ENCODE measurements at regions of chr15 and their contacts with region 1.

Region 1: DNA sequence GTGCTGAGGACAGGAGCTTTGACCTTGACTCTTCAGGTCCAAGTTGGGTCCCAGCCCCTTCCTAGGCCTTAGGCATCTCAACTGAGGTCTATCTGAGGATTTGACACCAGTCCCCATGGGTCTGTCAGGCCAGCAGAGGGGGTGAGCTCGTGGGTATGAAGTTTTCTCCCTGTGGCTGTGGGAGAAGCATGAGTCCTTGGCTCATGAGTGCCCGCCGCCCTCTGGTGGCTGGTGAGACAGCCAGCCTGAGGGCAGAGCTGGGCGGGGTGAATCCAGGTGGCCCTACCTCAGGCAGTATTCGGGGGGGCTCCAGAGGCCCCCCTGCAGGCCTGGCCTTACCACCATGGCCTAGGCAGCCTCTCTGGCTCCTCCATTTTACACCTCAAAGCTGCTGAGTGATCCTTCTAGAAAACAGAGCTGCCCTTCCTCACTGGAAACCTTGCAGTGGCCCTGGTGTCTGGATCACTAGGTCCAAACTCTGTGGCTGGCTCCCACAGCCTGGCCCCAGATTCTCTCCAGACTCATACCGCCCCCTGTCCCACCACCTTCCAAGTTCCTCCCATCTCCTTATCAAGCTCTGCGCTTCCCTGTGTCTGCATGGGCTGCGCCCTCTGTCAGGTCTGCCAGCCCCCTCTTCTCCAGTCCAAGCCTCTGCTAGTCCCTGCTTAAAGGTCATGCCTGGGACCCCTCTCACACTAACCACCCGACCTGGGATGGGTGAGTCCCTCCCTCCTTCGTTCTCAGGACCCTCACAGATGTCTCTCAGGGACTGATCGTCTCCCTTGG is 16.1 kb downstream of the SH2D7 start:
- DNase-seq: peak; percentile 63 to 83 (median 76)
- H3K4me3 ChIP-seq: no peak overlapping the region
- H3K27ac ChIP-seq: no peak overlapping the region
- H3K27me3 ChIP-seq: no peaks in the 10 kb centered on the region
- CTCF ChIP-seq: peak; percentile 67 to 99 (median 94)

Region 2: DNA sequence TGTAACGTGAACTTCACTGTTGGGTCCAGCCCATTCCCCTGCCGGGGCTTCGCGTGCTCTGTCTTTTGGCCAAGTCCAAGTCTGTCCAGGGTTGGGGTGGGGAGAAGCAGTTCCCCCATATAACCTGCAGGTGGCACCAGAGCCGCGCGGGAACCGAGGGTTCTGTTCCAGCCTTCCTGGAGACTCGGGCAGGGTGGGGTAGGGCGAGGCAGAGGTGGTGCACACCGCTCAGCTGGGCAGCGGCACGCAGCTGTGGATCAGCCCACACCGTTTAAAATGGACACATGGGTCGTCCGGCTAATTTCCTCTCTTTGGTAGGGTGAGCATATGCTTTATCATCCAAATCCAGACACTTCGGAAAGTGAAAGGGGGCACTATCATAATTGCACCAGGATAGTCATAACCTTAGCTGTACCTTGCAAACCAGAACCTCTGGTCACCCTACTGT is 149.0 kb before region 1 on chr15:
- intact Hi-C with region 1: loop called (anchors 1 to 2 kb)
- DNase-seq: peak in 9 of 10 donors; percentile 68 to 84 (median 75)
- H3K4me3 ChIP-seq: peak overlapping the region in 52 of 59 donors; percentile 9 to 61 (median 40)
- H3K27ac ChIP-seq: no peak overlapping the region
- H3K27me3 ChIP-seq: no peaks in the 10 kb centered on the region
- CTCF ChIP-seq: peak; percentile 82 to 98 (median 94)

Region 3: GRCh38 chr15:77966540-77967290 is 141.8 kb before region 1 on chr15:
- intact Hi-C with region 1: loop called (anchors 1 to 2 kb)
- DNase-seq: peak in 7 of 10 donors; percentile 44 to 75 (median 64)
- H3K4me3 ChIP-seq: no peak overlapping the region
- H3K27ac ChIP-seq: no peak overlapping the region
- H3K27me3 ChIP-seq: no peaks in the 10 kb centered on the region
- CTCF ChIP-seq: peak; percentile 70 to 97 (median 89)

Region 4: DNA sequence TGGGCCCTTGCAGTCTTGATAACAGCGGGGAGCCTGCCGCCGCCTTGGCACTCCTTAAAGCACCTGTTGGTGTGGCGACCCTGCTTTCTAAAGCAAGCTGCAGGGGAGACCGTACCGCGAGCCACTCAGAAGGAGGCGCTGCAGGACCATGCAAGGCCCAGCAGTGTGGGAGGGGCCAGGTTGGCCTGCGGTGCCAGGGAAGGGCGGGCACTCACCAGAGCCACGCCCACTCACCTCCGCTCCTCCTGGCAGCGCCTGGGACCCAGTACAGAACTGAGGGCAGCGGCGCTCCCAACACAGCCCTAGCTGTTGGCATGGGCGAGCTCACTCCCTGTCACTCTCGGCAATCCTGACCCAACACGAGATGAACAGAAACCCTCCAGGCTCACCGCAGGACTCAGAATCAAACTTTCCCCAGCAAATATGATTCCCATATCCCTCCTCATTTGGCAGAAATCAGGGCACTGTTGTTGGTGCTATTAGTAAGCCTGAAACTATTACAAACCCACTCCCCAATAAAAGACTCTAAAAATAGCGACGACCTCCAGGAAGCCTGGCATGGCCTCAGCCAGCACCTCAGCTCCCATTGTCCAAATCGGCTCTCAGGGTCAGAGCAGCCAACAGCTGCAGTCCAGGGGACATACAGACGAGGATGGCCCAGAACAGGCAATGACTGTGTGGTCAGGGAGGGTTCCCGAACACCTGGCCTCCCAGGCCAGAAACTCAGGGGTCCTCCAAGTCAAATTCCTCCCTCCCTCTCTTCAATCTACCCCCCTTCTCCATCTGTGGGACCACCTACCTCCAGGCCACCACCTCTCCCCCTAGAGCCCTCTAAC is 108.2 kb before region 1 on chr15:
- intact Hi-C with region 1: loop called in 1 of 2 experiments (anchors 1 kb)
- DNase-seq: peak in 3 of 10 donors; percentile 32 to 46 (median 43)
- H3K4me3 ChIP-seq: no peak overlapping the region
- H3K27ac ChIP-seq: no peak overlapping the region
- H3K27me3 ChIP-seq: no peaks in the 10 kb centered on the region
- CTCF ChIP-seq: peak in 38 of 56 donors; percentile 16 to 59 (median 39)

Region 5: GRCh38 chr15:78149068-78149804 is 40.7 kb after region 1 on chr15 and contains the start of gene IDH3A:
- intact Hi-C with region 1: no loop called
- DNase-seq: peak; percentile 98 to 100 (median 99)
- H3K4me3 ChIP-seq: peak within 1 kb of the TSS; percentile 67 to 96 (median 86)
- H3K27ac ChIP-seq: peak within 1 kb of the TSS in 52 of 59 donors; percentile 15 to 90 (median 74)
- H3K27me3 ChIP-seq: no peaks in the 10 kb centered on the region
- CTCF ChIP-seq: peak in 13 of 56 donors; percentile 3 to 46 (median 15)
- total RNA-seq, gene IDH3A: 101 to 276 (median 201) TPM

Region 6: DNA sequence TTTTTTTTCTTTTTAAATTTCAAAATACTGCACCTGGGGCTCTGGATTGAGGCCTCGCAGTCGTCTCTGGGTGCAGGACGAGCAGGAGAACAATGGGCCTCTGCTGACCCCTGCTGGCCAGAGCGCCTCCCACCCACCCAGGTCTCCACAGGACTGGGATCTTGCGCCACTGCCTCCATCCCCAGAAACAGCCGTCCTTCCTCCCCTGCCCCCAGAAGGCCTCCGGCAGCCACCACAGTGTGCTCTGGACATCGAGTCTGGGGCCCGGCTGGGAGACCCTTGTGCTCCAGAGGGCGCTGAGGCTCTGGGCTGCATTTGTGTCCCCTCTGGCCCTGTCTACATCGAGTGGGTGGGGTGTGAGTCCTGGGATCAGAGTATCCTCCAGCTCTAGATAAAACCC is 132.5 kb after region 1 on chr15:
- intact Hi-C with region 1: loop called (anchors 1 to 5 kb)
- DNase-seq: peak; percentile 77 to 92 (median 89)
- H3K4me3 ChIP-seq: no peak overlapping the region
- H3K27ac ChIP-seq: peak overlapping the region in 5 of 59 donors; percentile 14 to 55 (median 44)
- H3K27me3 ChIP-seq: peaks cover 0 to 4% (median 0%) of the 10 kb centered on the region in 45 donors
- CTCF ChIP-seq: peak; percentile 44 to 98 (median 91)

Region 7: DNA sequence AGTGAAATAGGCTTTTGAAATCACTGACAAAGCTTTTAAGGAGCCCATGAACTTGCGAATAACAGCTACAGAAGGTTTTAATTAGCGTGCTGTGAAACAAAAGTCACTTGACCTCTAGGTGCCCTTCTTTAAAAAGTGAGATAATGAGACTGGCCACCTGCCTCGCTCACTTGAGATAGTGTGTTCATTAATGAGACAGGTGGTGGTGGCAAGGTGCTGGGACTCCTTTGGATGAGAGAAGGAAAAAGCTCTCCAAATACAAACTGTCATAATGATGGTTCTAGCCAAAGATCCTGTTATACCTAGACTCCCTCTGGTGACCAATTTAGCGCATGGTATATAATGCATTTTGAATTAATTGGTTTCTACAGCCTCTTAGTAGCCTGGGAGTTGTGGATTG is 306.8 kb after region 1 on chr15:
- intact Hi-C with region 1: loop called (anchors 5 to 10 kb)
- DNase-seq: no peak
- H3K4me3 ChIP-seq: no peak overlapping the region
- H3K27ac ChIP-seq: no peak overlapping the region
- H3K27me3 ChIP-seq: peaks cover 0 to 22% (median 0%) of the 10 kb centered on the region in 45 donors
- CTCF ChIP-seq: peak in 44 of 56 donors; percentile 8 to 58 (median 34)

Region 8: GRCh38 chr15:78422571-78423340 is 314.3 kb after region 1 on chr15:
- intact Hi-C with region 1: loop called (anchors 5 to 10 kb)
- DNase-seq: peak; percentile 51 to 77 (median 65)
- H3K4me3 ChIP-seq: no peak overlapping the region
- H3K27ac ChIP-seq: no peak overlapping the region
- H3K27me3 ChIP-seq: peaks cover 0 to 18% (median 0%) of the 10 kb centered on the region in 45 donors
- CTCF ChIP-seq: peak; percentile 76 to 97 (median 92)